MCF 10A (cell line): ENCODE measurements at regions of chr14 and their contacts with region 1.

Region 1: GRCh38 chr14:50667996-50668825 is at the start of gene SAV1:
- DNase-seq: peak; percentile 86
- H3K4me3 Mint-ChIP-seq: no peak within 1 kb of the TSS
- H3K27ac Mint-ChIP-seq: no peak within 1 kb of the TSS
- H3K4me1 Mint-ChIP-seq: peaks cover 13% of the 10 kb centered on the region
- H3K27me3 Mint-ChIP-seq: no peaks in the 10 kb centered on the region
- CTCF ChIP-seq: no peak
- total RNA-seq, gene SAV1: 32.5 and 34.7 TPM in 2 replicates

Region 2: DNA sequence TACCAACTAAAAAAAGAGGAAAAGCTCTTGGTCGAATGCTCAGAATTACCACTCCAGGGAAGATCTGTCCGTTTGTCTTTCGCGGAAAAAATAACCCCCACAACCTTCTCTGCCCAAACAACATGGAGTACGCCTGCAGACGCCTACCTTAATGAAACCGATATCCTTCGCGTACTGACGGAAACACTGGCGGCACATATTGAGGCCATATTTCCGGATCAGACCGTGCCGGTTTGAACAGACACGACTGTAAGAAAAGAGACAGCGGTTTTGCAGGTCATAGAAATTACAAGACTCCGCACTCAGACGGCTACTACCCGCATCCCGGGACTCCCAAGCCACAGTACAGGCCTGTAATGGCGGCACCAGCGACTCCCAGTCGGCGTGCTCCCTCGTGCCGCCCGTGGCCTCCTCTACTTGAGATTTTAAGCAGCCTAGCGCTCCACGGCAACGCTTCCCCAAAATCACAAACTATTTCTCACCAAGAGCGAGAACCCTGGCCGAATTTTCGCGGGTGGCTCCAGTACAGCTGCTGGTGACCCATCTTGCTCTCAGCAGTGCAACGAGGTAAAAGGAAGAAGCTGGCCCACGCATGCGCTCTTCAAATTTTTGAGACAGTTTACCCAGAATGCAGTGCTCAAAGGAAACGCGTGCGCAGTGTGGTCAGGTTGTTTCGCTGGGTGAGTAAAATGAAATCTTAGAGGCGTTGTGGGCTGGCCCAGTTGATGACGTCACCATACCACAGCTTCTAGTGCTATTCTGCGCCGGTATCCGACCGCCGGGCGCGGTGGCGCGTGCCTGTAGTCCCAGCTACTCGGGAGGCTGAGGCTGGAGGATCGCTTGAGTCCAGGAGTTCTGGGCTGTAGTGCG is 1082.2 kb before region 1 on chr14 and contains the start of gene RPS29:
- CTCF ChIA-PET with region 1: no interaction called
- POLR2A ChIA-PET with region 1: no interaction called
- intact Hi-C with region 1: no loop called
- DNase-seq: peak; percentile 99
- H3K4me3 Mint-ChIP-seq: peak within 1 kb of the TSS; percentile 81
- H3K27ac Mint-ChIP-seq: peak within 1 kb of the TSS; percentile 98
- H3K4me1 Mint-ChIP-seq: peaks cover 19% of the 10 kb centered on the region
- H3K27me3 Mint-ChIP-seq: no peaks in the 10 kb centered on the region
- CTCF ChIP-seq: no peak
- total RNA-seq, gene RPS29: 1,499 and 1,837 TPM in 2 replicates

Region 3: GRCh38 chr14:50559990-50560930 is 108.0 kb before region 1 on chr14 and contains the start of gene ATL1:
- CTCF ChIA-PET with region 1: no interaction called
- POLR2A ChIA-PET with region 1: interaction called, 31 read pairs
- intact Hi-C with region 1: no loop called
- DNase-seq: peak; percentile 77
- H3K4me3 Mint-ChIP-seq: peak within 1 kb of the TSS; percentile 88
- H3K27ac Mint-ChIP-seq: peak within 1 kb of the TSS; percentile 93
- H3K4me1 Mint-ChIP-seq: peaks cover 10% of the 10 kb centered on the region
- H3K27me3 Mint-ChIP-seq: no peaks in the 10 kb centered on the region
- CTCF ChIP-seq: no peak
- total RNA-seq, gene ATL1: 3.2 and 3.3 TPM in 2 replicates

Region 4: GRCh38 chr14:50599700-50600444 is 68.3 kb before region 1 on chr14:
- CTCF ChIA-PET with region 1: interaction called, 3 read pairs
- POLR2A ChIA-PET with region 1: interaction called, 33 read pairs
- intact Hi-C with region 1: loop called (anchors 2 kb)
- DNase-seq: peak; percentile 72
- H3K4me3 Mint-ChIP-seq: peak overlapping the region; percentile 59
- H3K27ac Mint-ChIP-seq: peak overlapping the region; percentile 98
- H3K4me1 Mint-ChIP-seq: peaks cover 43% of the 10 kb centered on the region
- H3K27me3 Mint-ChIP-seq: no peaks in the 10 kb centered on the region
- CTCF ChIP-seq: peak; percentile 37

Region 5: DNA sequence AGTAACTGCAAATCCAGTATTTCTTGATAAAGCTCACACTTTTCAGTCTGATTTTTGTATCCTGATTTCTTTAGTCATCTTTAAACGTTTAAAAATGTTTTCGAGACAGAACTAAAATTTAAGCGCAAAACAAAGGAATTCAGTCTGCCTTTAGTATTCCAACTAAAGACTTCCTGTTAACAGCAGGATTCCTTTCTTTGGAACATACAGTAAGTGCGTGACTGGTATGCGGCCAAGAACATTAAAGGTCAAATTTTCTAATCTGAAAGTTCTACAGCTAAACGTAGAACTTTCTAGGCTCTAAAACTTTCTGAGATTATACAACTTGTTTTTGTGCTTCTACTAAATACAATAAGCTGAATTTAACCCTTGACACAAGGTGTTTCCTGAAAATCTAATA is 10.0 kb before region 1 on chr14:
- CTCF ChIA-PET with region 1: interaction called, 5 read pairs
- POLR2A ChIA-PET with region 1: interaction called, 38 read pairs
- intact Hi-C with region 1: no loop called
- DNase-seq: peak; percentile 41
- H3K4me3 Mint-ChIP-seq: no peak overlapping the region
- H3K27ac Mint-ChIP-seq: peak overlapping the region; percentile 51
- H3K4me1 Mint-ChIP-seq: peaks cover 35% of the 10 kb centered on the region
- H3K27me3 Mint-ChIP-seq: no peaks in the 10 kb centered on the region
- CTCF ChIP-seq: no peak

Region 6: DNA sequence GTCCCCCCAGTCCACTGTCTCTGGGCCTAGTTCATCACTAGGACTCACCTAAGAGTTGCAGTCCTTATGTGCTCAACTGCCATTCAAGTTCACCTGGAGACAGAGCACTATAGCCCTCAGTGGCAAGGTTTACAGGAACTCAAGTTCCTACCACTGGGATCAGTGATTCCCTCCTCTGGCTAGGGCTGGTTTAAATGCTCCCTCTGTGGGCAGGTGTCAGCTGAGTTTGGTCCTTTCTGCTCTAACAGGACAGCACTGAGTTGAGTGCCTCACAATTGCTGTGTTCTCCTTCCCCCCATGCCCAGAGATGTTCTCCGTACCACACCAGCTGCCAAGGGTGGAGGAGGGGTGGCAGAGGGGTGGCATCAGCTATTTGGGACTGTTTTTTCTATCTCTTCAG is 20.7 kb after region 1 on chr14:
- CTCF ChIA-PET with region 1: no interaction called
- POLR2A ChIA-PET with region 1: interaction called, 10 read pairs
- intact Hi-C with region 1: no loop called
- DNase-seq: no peak
- H3K4me3 Mint-ChIP-seq: no peak overlapping the region
- H3K27ac Mint-ChIP-seq: no peak overlapping the region
- H3K4me1 Mint-ChIP-seq: no peaks in the 10 kb centered on the region
- H3K27me3 Mint-ChIP-seq: no peaks in the 10 kb centered on the region
- CTCF ChIP-seq: no peak

Region 7: DNA sequence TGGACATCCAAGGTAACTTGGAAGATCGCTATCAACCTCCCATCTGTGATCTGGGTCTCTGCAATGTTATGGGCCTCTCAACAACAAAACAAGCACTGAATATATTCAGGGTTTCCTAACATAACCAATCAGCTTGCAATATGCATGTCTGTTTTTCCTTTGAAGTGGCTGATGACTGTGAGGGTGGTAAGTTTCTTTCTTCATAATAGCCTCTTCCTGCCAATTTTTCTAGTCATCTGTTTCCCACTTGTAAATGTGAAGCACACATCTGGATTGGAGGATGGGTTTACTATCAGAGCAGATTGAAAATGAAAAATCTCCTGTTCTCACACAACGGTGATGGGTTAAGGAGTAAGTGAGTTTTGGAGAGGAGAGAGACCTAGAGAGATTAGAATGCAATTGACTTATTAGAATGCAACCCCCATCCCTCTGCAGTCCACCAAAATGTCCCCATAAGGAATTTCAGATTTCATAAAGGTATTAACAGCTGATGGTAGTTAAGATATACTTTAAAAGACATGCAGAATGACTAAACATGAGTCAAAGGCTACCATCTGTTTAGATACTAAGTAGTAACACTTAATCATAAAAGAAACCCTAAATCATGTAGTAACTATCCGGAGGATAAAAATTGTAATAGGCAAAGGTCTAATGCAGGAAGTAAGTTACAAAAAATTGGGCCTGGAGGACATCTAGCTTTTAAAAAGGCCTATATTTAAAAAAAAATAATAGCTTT is 58.3 kb after region 1 on chr14:
- CTCF ChIA-PET with region 1: no interaction called
- POLR2A ChIA-PET with region 1: interaction called, 4 read pairs
- intact Hi-C with region 1: loop called (anchors 5 kb)
- DNase-seq: peak; percentile 43
- H3K4me3 Mint-ChIP-seq: no peak overlapping the region
- H3K27ac Mint-ChIP-seq: peak overlapping the region; percentile 79
- H3K4me1 Mint-ChIP-seq: peaks cover 6% of the 10 kb centered on the region
- H3K27me3 Mint-ChIP-seq: no peaks in the 10 kb centered on the region
- CTCF ChIP-seq: no peak